Prostate gland (tissue), 2 donors: ENCODE measurements at regions of chr17 and their contacts with region 1.

Region 1: DNA sequence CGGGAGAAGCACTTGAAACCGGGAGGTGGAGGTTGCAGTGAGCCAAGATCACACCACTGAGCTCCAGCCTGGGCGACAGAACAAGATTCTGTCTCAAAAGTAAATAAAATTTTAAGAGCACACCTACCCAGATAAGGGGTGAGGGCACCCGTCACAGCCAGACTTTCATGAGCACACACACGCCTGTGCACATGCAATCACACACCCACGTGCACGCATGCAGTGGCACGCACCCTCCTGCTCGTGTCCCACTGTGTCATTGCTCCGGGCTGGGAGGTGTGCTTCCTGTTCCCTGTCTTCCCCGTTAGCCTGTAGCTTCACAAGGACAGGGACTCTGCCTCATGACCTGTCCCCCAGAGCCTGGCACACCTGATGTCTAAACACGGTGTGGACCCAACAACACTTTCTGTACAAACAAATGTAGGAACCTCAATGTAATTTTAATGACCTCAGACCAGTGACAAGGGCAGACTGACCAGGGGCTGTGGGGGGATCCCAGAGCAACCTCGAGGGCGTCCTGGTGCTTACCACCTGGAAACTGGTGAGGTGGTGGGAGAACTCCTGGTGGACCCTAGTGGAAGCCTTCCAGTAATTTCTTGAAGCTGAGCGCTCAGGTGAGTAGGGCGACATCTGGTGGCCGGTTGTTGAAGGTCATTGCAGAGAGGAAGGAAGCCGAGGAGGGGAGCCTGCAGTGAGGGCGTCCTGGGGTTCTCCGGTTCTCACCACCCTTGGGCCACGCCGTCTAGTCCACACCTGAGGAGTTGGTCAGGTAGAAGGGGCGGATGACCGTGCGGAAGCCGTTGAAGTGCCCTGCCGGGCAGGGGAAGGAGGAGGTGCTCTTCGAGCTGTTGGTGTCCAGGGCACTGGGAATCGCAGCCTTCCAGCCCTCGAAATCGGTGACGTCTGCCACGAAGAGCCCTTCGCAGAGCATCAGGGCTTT is 8.6 kb downstream of the LGALS3BP start:
- DNase-seq: peak; percentile 69
- H3K4me3 ChIP-seq: no peak overlapping the region
- H3K27ac ChIP-seq: peak overlapping the region; percentile 24 to 55
- H3K4me1 ChIP-seq: peaks cover 13% of the 10 kb centered on the region
- H3K27me3 ChIP-seq: no peaks in the 10 kb centered on the region
- CTCF ChIP-seq: peak; percentile 78 to 93 (median 91)
- POLR2A ChIP-seq: no peak

Region 2: GRCh38 chr17:78865682-78866390 is 105.3 kb before region 1 on chr17:
- intact Hi-C with region 1: loop called (anchors 1 kb)
- DNase-seq: peak; percentile 65
- H3K4me3 ChIP-seq: no peak overlapping the region
- H3K27ac ChIP-seq: peak overlapping the region in 1 of 2 donors; percentile 15
- H3K4me1 ChIP-seq: no peaks in the 10 kb centered on the region
- H3K27me3 ChIP-seq: no peaks in the 10 kb centered on the region
- CTCF ChIP-seq: peak; percentile 31 to 90 (median 78)
- POLR2A ChIP-seq: no peak

Region 3: GRCh38 chr17:78933025-78933958 is 37.8 kb before region 1 on chr17:
- intact Hi-C with region 1: loop called (anchors 5 kb)
- DNase-seq: no peak
- H3K4me3 ChIP-seq: no peak overlapping the region
- H3K27ac ChIP-seq: peak overlapping the region; percentile 92
- H3K4me1 ChIP-seq: peaks cover 14% of the 10 kb centered on the region
- H3K27me3 ChIP-seq: no peaks in the 10 kb centered on the region
- CTCF ChIP-seq: no peak
- POLR2A ChIP-seq: no peak